Activated CD4-positive, alpha-beta T cell treated with anti-CD3 and anti-CD28 coated beads, Interleukin-2, amount 10 ng/mL, durations not matched to agents 24 days and 14 days (primary cell): ENCODE measurements at regions of chr1 and their contacts with region 1.

Region 1: DNA sequence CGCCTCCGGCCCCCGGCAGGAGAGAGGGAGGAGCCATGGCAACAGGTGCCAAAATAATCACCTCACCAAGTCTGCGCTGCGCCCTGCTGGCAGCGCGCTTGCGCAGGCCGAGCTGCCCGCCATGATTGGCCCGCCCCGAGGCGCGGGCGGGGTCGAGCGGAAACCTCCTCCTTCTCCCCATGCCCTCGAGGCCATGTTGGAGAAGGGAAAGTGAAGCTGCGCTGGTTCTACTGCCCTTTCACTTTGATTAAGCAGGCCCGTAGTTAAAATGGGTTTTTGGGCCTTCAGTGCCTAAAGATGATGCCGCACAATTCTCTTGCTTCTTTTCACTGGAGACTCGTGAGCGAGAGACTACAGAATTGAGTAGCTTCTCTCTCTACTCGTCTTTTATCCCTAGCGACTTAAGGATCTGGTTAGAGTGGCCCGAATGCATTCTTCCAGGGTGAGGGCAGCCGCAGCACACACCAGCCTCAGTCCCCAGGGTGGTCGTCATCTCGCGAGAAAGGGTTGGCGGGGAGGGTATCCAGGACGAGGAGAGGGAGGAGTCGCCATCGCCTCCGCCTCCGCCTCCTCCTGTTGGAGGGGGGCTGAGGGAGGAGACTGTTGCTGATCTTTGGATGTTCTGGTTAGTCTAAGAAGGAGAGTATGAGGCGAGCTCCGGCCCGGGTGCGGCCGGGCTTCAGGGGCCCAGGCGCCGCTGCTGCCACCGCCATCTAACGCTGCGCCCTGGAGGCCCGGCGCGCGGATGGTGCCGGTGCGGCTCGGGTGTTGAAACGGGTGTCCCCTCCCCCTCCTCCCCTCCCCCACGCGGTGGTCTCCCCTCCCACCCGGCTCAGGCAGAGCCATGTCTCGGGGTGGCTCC is at the start of gene DCAF6:
- DNase-seq: peak; percentile 99
- H3K4me3 Mint-ChIP-seq: peak within 1 kb of the TSS; percentile 97
- H3K27ac Mint-ChIP-seq: peak within 1 kb of the TSS; percentile 98
- H3K4me1 Mint-ChIP-seq: peaks cover 33% of the 10 kb centered on the region
- H3K27me3 Mint-ChIP-seq: no peaks in the 10 kb centered on the region
- total RNA-seq, gene DCAF6: 20.6 and 24.1 TPM in 2 replicates

Region 2: GRCh38 chr1:166875734-166876539 is 1060.4 kb before region 1 on chr1 and contains the start of gene TADA1:
- intact Hi-C with region 1: loop called (anchors 5 kb)
- DNase-seq: peak; percentile 99
- H3K4me3 Mint-ChIP-seq: peak within 1 kb of the TSS; percentile 91
- H3K27ac Mint-ChIP-seq: peak within 1 kb of the TSS; percentile 100
- H3K4me1 Mint-ChIP-seq: peaks cover 46% of the 10 kb centered on the region
- H3K27me3 Mint-ChIP-seq: peaks cover 7% of the 10 kb centered on the region
- total RNA-seq, gene TADA1: 17.0 and 18.4 TPM in 2 replicates

Region 3: GRCh38 chr1:167599957-167600581 is 336.2 kb before region 1 on chr1:
- intact Hi-C with region 1: loop called (anchors 1 kb)
- DNase-seq: peak; percentile 85
- H3K4me3 Mint-ChIP-seq: peak overlapping the region; percentile 72
- H3K27ac Mint-ChIP-seq: peak overlapping the region; percentile 85
- H3K4me1 Mint-ChIP-seq: peaks cover 40% of the 10 kb centered on the region
- H3K27me3 Mint-ChIP-seq: peaks cover 4% of the 10 kb centered on the region

Region 4: DNA sequence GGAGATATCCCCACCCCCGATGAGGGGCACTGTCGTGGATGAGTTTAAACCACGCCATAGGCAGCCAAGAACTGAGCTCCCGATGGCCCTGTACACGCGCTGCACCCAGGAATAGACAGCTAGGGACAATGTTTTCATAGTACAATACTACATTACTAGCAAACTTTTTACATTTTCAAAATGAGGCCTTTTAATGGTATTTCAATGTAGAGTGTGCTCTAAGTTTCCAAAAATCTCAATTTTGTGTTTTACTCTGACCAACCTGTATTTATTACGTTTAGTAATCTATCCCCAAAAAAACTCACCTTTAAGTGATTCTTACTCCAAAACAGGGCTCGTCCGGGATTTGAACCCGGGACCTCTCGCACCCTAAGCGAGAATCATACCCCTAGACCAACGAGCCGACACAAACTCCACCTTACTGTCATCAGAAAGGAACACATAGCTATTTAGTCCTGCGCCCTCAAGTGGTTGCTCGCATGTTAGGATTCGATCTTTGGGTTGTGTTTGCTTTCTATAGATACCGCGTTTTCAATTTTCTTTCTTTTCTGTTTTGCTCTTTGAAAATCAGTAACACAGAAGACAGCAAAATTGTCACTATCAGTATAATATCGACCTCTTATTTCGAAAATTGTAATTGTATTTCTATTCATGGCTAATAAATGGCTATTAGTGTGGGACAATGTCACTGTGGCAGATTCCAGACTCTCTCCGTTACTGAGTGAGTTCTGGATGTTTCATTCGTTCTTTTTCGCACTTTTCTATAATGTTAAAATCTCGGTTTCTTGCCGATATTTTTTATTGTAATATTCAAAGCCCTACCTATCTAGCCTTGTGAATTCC is 220.9 kb before region 1 on chr1:
- intact Hi-C with region 1: loop called (anchors 1 kb)
- DNase-seq: peak; percentile 97
- H3K4me3 Mint-ChIP-seq: peak overlapping the region; percentile 96
- H3K27ac Mint-ChIP-seq: peak overlapping the region; percentile 98
- H3K4me1 Mint-ChIP-seq: peaks cover 56% of the 10 kb centered on the region
- H3K27me3 Mint-ChIP-seq: peaks cover 13% of the 10 kb centered on the region

Region 5: DNA sequence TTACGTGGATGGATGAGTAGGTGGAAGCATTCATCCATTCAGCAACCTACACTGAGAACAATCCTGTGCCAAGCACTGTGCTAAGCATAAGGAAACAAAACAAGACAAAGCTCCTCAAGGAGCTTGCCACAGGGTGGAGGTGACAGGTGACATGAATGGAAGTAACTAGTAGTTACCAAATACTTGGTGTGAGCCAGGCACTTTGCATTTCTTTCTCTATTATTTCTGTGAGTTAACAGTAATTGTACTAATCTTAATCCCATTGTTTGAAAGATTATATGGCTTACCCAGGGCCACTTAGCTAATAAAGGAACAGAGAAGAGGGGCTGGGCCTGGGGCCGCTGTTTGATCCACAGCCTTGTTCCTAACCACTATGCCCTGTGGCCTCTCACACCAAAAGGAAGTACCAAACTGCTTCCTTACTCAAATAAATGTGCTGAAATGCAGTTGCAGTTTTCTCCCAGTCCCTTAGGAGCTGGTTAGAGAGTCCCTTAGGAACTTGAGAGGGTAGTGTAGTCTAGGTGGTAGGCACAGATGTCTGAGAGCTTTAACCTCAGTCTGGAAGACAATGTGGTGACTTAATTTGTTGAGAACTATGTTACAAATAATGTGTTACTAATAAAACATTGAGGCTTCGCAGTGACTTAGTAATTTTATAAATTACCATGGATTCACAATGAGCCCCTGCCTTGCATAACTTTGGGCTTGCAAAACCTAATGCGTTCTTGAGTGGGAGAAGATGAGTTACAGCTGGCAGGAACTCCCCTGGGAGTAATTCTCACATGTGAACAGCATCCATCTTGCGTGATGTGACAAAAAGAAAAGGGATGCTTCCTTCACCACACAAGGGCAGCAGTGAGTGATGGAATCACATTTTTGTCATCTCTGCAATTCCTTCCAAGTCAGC is 144.8 kb before region 1 on chr1:
- intact Hi-C with region 1: no loop called
- DNase-seq: no peak
- H3K4me3 Mint-ChIP-seq: no peak overlapping the region
- H3K27ac Mint-ChIP-seq: no peak overlapping the region
- H3K4me1 Mint-ChIP-seq: peaks cover 7% of the 10 kb centered on the region
- H3K27me3 Mint-ChIP-seq: no peaks in the 10 kb centered on the region

Region 6: GRCh38 chr1:167803358-167804207 is 132.7 kb before region 1 on chr1:
- intact Hi-C with region 1: loop called (anchors 2 kb)
- DNase-seq: peak; percentile 96
- H3K4me3 Mint-ChIP-seq: peak overlapping the region; percentile 68
- H3K27ac Mint-ChIP-seq: peak overlapping the region; percentile 87
- H3K4me1 Mint-ChIP-seq: peaks cover 26% of the 10 kb centered on the region
- H3K27me3 Mint-ChIP-seq: no peaks in the 10 kb centered on the region

Region 7: DNA sequence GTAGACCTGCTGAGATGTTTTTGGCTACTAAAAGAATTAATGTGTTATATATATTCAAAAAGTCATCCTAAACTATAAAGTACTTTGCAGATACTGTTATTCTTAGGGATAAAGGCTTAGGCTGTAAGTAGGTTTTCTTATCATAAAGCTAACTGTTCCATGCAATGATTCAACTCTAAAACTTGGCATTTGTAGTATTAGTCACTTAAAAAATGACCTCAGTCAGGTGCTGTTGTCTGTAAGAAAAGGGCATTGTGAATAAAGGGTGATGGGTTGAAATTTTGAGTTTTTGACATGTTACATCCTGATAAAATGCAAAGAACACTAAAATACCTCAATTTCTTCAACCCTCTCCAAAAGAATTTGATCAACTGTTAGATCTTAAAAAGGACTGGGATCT is 55.2 kb before region 1 on chr1:
- intact Hi-C with region 1: no loop called
- DNase-seq: no peak
- H3K4me3 Mint-ChIP-seq: no peak overlapping the region
- H3K27ac Mint-ChIP-seq: no peak overlapping the region
- H3K4me1 Mint-ChIP-seq: no peaks in the 10 kb centered on the region
- H3K27me3 Mint-ChIP-seq: peaks cover 7% of the 10 kb centered on the region

Region 8: DNA sequence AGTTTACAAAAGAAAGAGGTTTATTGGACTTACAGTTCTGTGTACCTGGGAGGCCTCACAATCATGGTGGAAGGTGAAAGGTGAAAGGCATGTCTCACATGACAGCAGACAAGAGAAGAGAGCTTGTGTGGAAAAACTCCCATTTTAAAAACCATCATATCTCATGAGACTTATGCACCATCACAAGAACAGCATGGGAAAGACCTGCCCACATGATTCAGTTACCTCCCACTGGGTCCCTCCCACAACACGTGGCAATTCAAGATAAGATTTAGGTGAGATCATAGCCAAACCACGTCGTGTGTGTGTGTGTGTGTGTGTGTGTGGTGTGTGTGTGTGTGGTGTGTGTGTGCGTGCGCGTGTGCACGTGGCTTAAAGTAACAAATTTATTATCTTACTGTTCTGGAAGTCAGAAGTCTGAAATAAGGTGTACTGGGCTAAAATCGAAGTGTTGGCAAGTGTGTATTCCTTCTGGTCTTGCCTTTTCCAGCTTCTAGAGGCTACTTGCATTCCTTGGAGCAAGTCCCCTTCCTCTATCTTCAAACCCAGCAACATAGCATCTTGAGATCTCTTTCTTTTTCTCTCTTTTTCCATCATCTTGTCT is 48.7 kb after region 1 on chr1:
- intact Hi-C with region 1: loop called (anchors 5 kb)
- DNase-seq: peak; percentile 58
- H3K4me3 Mint-ChIP-seq: no peak overlapping the region
- H3K27ac Mint-ChIP-seq: peak overlapping the region; percentile 3
- H3K4me1 Mint-ChIP-seq: peaks cover 6% of the 10 kb centered on the region
- H3K27me3 Mint-ChIP-seq: no peaks in the 10 kb centered on the region

Region 9: DNA sequence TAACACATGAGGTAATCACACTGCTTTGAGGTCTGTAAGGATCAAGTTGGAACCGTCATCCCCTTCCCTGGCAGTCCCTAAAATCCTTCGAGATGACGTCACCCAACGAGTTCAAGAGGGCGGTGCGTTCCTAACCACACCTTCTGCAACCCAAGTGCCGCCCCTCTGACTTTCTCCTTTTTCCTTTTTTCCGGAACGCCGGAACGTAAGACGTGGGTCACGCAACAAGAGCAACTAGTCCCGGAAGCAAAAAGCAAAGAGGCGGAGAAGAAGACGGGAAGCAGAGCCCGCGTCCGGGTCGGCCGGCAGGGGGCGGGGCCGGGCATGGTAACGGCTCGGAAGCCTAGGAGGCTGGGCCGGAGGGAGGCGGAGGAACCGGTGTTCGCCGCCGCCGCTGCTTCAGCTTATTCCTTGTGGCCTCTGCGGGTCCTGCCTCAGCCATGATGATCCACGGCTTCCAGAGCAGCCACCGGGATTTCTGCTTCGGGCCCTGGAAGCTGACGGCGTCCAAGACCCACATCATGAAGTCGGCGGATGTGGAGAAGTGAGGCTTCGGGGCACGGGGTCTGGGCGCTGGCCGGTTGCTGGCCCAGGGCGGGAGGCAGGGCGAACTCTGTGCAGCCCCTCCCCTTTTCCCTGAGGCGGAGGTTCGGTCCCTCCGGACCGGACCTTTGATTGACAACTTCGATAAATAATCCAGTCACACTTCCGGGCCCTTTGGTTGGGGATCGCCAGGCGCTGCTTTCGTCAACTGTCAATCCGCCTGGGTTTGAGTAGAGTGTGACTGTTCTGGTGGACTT is 242.5 kb after region 1 on chr1 and contains the start of gene TIPRL:
- intact Hi-C with region 1: loop called (anchors 1 kb)
- DNase-seq: peak; percentile 98
- H3K4me3 Mint-ChIP-seq: no peak within 1 kb of the TSS
- H3K27ac Mint-ChIP-seq: no peak within 1 kb of the TSS
- H3K4me1 Mint-ChIP-seq: peaks cover 8% of the 10 kb centered on the region
- H3K27me3 Mint-ChIP-seq: peaks cover 6% of the 10 kb centered on the region
- total RNA-seq, gene TIPRL: 46.8 and 49.2 TPM in 2 replicates